ENCODE measurements at regions of chr20 and their contacts with region 1.

Region 1: GRCh38 chr20:24634855-24635254 is 165.4 kb downstream of the SYNDIG1 start:
- DNase-seq: peak; percentile 75

Region 2: DNA sequence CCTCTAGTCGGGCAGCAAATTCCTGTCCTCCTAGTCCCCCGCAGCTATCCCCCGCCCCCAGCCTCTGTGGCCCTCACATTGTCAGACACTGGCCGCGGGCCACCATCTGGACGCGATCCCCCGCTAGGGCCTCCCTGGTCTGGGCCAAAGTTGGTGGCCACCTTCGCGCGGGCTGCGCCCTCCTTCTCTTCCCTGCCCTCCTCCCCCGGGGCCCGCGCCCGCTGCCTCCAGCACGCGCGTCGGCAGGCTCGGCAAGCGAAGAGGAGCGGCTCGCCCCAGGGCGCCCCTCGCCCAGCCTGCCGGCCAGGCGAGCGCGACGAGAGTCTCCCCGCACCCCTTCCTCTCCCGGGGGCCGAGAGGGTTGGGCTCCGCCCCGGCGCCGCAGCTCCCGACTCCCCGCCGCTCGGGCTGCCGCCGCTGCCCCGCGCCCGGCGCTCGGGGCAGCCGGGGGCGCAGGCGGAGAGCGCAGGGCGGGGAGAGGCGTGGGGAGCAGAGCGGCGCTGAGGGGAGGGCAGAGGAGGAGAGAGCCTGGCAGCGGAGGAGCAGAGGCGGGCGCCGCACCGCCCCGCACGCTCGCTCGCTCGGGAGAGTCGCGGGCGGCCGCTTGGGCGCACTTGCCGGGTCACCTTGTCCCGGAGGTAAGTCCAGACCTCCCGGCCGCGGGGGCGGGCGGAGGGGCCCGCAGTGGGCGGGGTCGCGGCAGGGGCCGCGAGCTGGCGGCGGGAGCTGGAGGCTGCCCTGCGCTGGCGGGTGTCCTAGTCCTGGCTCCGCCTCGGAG is 165.6 kb before region 1 on chr20 and contains the start of gene SYNDIG1:
- intact Hi-C with region 1: loop called (anchors 10 kb)
- DNase-seq: peak; percentile 75
- total RNA-seq, gene SYNDIG1: 17.6 TPM

Region 3: DNA sequence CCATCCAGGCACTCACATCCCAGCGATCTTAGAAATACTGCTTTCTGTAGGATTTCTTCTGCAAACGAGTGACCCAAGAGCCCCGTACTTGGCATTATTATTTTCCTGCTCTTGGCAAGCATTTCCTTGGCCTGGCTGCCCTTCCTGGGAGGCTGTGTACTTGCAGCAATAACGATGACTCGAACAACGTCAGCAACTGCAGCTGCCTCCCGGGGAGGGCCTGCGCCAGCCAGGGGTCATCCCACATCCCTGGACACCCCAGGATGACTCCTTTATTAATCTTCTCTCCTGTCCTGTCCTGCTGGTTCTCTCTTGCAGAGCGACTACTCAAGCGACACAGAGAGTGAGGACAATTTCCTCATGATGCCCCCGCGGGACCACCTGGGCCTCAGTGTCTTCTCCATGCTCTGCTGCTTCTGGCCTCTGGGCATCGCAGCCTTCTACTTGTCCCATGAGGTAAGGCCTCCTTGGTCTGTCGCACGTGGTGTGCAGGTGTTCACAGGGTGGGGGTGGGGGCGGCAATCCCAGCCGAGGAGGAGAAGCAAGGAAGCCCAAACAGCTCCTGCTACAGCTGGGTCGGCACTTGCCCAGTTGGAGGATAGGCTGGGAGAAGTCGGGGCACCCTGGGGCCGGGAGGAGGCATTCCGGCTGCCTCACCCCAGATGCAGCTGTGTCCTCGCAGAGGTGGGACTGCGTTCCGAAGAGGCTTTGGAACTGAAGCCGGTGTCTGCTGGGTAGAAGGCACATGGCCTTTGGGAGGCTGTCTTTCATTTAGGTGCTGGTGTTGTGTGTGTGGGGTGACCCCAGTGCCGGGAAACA is 50.1 kb before region 1 on chr20:
- intact Hi-C with region 1: no loop called
- DNase-seq: no peak